Thyroid gland (tissue), 4 donors: ENCODE measurements at regions of chr2 and their contacts with region 1.

Region 1: GRCh38 chr2:30346471-30347169 is 100.4 kb upstream of the LCLAT1 start:
- DNase-seq: peak; percentile 93 to 94
- H3K4me3 ChIP-seq: peak overlapping the region in 1 of 3 donors; percentile 21
- H3K27ac ChIP-seq: peak overlapping the region; percentile 96 to 99 (median 98)
- H3K4me1 ChIP-seq: peaks cover 28 to 32% of the 10 kb centered on the region in 2 donors
- H3K27me3 ChIP-seq: no peaks in the 10 kb centered on the region
- CTCF ChIP-seq: no peak
- POLR2A ChIP-seq: peak in 1 of 2 donors; percentile 76

Region 2: DNA sequence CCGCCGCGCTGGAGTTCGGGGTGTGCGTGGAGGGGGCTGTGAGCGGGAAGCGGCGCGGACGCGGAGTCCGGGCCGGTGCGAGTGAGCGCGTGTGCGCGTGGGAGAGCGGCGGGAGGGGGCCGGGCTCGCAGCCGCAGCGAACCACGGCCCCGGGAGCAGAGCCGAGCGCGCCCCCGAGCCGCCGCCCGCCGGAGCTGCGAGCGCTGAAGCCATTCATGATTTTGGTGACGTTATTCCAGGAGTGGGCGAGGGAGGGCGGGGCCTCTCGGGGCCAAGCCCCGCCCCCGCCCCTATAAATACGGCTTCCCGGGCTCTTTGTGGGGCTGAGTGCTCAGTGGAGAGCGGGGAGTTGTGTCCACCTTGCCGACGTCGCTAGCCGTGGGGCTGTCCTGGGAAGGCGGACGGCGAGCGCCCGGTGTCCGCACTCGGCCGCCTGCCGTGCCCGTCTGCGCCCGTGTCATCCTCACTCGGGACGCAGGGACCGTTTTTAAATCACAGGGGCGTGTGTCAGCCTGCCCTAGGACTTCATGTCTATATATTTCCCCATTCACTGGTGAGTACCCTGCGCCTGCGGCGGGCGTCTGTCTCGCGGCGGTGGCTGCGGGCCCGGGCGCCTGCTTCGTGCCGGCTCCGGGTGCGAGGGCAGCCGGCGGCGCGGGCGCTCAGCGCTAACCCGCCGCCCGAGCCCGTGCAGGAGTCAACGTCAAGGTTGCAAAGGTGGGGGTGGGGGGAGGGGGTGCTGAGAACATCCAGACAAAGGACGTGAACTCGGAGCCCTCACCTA is 115.2 kb before region 1 on chr2 and contains the start of gene LBH:
- intact Hi-C with region 1: loop called (anchors 10 kb)
- DNase-seq: peak; percentile 84 to 88
- H3K4me3 ChIP-seq: peak within 1 kb of the TSS; percentile 80 to 95 (median 89)
- H3K27ac ChIP-seq: peak within 1 kb of the TSS; percentile 96 to 99 (median 97)
- H3K4me1 ChIP-seq: peaks cover 30 to 44% of the 10 kb centered on the region in 2 donors
- H3K27me3 ChIP-seq: no peaks in the 10 kb centered on the region
- CTCF ChIP-seq: no peak
- POLR2A ChIP-seq: peak; percentile 99 to 100
- total RNA-seq, gene LBH: 104 to 206 (median 126) TPM